ENCODE measurements at regions of chr13 and their contacts with region 1.

Region 1: GRCh38 chr13:36148446-36148845 is 17.3 kb upstream of the DCLK1 start:
- DNase-seq: no peak
- ATAC-seq: no peak
- H3K4me3 ChIP-seq: no peak overlapping the region
- H3K27ac ChIP-seq: no peak overlapping the region
- H3K4me1 ChIP-seq: peaks cover 0 to 5% (median 0%) of the 10 kb centered on the region in 12 donors
- H3K27me3 ChIP-seq: no peaks in the 10 kb centered on the region
- CTCF ChIP-seq: no peak
- POLR2A ChIP-seq: no peak

Region 2: DNA sequence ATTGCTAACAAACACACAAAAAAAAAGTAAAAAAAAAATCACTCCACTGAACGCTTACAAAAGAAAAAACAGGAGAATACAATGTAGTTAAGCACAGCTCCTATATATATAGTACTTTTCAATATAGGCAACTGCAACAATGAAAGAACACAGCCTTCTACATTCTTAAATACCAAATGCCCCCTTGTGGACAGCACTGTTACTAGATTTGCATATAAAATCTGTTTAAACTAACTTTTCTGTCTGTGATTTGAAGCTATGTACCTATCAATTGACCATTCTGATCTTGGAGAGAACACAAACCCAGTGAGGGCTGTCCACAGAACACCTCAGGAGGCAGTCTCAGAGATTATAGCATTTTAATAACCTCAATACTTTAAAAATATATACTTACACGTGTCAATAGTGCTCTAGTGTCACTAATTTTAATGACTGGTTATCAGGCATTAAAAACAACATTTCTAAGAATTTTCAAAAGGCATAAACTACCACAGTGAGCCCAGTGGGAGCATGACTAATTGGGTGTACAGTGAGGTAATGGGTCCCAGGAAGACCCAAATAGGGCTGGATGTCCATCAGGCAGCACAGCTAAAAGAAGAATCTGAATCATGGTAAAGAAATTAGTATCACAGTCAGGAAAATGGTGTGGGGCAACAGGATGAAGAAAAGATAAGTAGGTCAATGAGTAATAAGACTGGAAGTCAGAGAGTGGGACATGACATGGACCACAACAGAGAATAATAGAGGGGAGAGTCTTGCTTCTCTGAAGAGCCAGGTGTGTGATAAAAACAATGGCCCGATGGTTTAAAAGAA is 127.0 kb after region 1 on chr13:
- intact Hi-C with region 1: loop called in 1 of 10 experiments (anchors 10 kb)
- DNase-seq: no peak
- ATAC-seq: peak in 3 of 4 donors; percentile 39 to 59 (median 42)
- H3K4me3 ChIP-seq: no peak overlapping the region
- H3K27ac ChIP-seq: no peak overlapping the region
- H3K4me1 ChIP-seq: peaks cover 0 to 3% (median 0%) of the 10 kb centered on the region in 12 donors
- H3K27me3 ChIP-seq: no peaks in the 10 kb centered on the region
- CTCF ChIP-seq: peak; percentile 48 to 79 (median 64)
- POLR2A ChIP-seq: no peak

Region 3: DNA sequence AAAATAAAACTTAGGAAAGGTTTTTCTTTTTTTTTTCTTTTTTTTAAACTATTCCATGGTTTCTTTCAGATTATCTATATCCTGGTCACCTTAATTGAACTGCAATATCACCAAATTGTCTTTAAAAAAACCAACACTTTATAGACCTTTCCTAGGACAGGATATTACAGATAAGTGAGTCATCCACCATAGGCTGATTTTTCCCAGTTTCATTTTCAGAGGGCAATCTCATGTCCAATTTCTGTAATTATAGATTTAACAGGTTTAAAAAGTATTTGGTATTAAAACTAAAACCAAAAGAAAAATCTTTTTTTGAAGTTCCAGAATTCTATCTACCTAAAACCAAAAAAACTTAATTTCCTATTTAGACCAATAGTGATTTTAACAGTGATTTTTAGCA is 184.5 kb after region 1 on chr13:
- intact Hi-C with region 1: no loop called
- DNase-seq: no peak
- ATAC-seq: no peak
- H3K4me3 ChIP-seq: no peak overlapping the region
- H3K27ac ChIP-seq: peak overlapping the region in 1 of 12 donors; percentile 18
- H3K4me1 ChIP-seq: peaks cover 0 to 45% (median 20%) of the 10 kb centered on the region in 12 donors
- H3K27me3 ChIP-seq: no peaks in the 10 kb centered on the region
- CTCF ChIP-seq: no peak
- POLR2A ChIP-seq: no peak